Left ventricle myocardium inferior (tissue), 1 donor: ENCODE measurements at regions of chr7 and their contacts with region 1.

Region 1: DNA sequence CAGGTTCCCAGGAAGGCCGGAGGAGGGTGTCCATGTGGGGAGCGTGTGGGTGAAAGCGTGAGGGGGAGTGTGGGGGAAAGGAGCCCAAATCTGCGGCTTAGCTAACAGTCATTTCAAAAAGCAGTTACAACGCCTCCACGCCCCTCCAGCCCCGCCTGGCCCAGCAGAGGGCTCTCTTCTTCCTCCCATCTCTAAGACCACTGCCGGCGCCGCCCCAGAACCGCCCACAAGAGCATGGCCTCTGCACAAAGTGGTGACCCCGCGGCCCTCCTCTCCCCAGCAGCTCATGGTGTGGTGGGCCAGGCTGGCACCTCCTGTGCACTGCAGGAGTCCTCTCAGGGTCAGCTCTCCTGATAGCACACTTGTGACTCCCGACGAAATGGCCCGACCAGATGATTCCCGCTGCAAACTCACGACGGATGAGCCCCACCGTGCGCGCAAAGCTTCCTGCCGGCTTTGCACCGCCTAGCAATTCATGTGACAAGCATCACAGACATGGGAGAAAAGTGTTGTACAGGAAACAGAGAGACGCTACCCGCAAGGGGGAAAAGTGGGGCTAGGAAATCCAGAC is 12.4 kb upstream of the HUS1 start:
- DNase-seq: peak; percentile 88
- H3K4me3 ChIP-seq: peak overlapping the region; percentile 70
- H3K27ac ChIP-seq: peak overlapping the region; percentile 71
- H3K4me1 ChIP-seq: peaks cover 11% of the 10 kb centered on the region
- H3K27me3 ChIP-seq: no peaks in the 10 kb centered on the region
- CTCF ChIP-seq: peak; percentile 76

Region 2: GRCh38 chr7:48109848-48110663 is 118.2 kb after region 1 on chr7:
- intact Hi-C with region 1: loop called (anchors 5 kb)
- DNase-seq: peak; percentile 71
- H3K4me3 ChIP-seq: no peak overlapping the region
- H3K27ac ChIP-seq: no peak overlapping the region
- H3K4me1 ChIP-seq: no peaks in the 10 kb centered on the region
- H3K27me3 ChIP-seq: no peaks in the 10 kb centered on the region
- CTCF ChIP-seq: peak; percentile 100